Activated CD4-positive, alpha-beta T cell treated with anti-CD3 and anti-CD28 coated beads, Interleukin-2, amount 10 ng/mL, durations not matched to agents 7 days and 5 days (primary cell): ENCODE measurements at regions of chr12 and their contacts with region 1.

Region 1: GRCh38 chr12:64696080-64696741 is 63.0 kb downstream of the GNS start:
- DNase-seq: no peak
- H3K4me3 Mint-ChIP-seq: no peak overlapping the region
- H3K27ac Mint-ChIP-seq: peak overlapping the region; percentile 28
- H3K4me1 Mint-ChIP-seq: peaks cover 76% of the 10 kb centered on the region
- H3K27me3 Mint-ChIP-seq: no peaks in the 10 kb centered on the region

Region 2: DNA sequence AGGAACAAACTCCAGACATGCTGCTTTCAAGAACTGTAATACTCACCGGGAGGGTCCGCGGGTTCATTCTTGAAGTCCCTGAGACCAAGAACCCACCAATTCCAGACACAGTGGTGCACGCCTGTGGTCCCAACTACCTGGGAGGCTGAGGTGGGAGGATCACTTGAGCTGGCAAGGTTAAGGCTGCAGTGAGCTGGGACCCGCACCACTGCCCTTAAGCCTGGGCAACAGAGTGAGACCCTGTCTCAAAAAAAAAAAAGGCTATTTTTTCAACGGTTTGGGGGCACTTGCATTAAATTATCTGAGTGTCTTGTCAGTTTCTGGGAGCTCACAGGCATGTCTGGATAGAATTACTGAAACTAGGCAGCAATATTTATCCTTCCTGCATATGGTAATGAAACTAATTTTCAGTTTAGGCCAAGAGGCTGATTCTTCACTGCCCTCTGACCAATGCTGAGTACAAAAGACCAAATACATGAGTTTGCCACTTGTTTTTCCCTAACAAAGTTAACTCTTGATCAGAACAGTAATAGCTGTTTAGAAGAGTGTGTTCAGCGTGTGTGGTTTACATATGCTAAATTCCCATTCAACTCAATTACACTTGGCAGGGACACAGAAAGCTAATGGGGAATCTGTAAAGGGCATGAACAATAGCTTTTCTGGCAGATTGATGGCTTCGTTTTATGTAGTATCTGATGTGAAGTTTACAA is 151.7 kb before region 1 on chr12:
- CTCF ChIA-PET with region 1: interaction called, 19 read pairs
- POLR2A ChIA-PET with region 1: no interaction called
- DNase-seq: no peak
- H3K4me3 Mint-ChIP-seq: no peak overlapping the region
- H3K27ac Mint-ChIP-seq: no peak overlapping the region
- H3K4me1 Mint-ChIP-seq: peaks cover 2% of the 10 kb centered on the region
- H3K27me3 Mint-ChIP-seq: peaks cover 11% of the 10 kb centered on the region

Region 3: DNA sequence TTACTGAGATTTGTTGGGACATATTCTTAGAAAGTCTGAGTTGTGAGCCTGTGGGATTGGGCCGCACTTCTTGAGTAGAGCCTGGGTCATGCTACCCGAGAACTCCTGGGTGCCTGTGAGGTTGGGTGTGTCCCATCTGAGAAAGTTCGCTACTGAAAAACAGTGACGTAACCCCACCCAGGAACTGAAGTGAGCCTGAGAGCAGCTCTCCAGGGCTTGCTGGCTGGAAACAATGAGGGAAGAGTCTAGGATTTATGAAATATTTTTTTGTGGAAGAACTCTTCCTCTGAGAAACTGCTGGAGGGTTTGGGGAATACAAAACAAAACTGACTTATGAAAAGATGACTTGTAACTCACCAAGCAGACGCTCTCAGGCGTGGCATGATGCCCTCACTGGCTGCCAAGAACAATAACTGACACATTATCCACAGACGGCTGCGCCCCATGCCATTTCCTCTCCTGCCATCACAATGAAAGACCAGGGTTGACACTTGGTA is 16.7 kb before region 1 on chr12:
- CTCF ChIA-PET with region 1: interaction called, 19 read pairs
- POLR2A ChIA-PET with region 1: no interaction called
- DNase-seq: peak; percentile 73
- H3K4me3 Mint-ChIP-seq: peak overlapping the region; percentile 65
- H3K27ac Mint-ChIP-seq: peak overlapping the region; percentile 92
- H3K4me1 Mint-ChIP-seq: peaks cover 94% of the 10 kb centered on the region
- H3K27me3 Mint-ChIP-seq: no peaks in the 10 kb centered on the region

Region 4: DNA sequence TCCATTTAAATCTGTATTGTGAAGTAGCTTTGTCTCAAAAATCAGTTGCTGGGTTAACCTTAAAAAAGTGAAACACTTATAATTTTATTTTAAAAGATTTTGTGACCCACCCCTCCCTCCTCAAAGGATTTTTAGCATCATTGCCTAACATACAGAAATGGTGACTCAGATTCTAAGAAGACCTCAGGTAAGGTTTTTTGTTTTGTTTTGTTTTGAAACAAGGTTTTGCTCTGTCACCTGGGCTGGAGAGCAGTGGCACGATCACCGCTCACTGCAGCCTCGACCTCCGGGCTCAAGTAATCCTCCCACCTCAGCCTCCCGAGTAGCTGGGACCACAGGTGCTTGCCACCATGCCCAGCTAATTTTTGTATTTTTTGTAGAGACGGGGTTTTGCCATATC is 11.2 kb before region 1 on chr12:
- CTCF ChIA-PET with region 1: interaction called, 19 read pairs
- POLR2A ChIA-PET with region 1: no interaction called
- DNase-seq: no peak
- H3K4me3 Mint-ChIP-seq: peak overlapping the region; percentile 38
- H3K27ac Mint-ChIP-seq: peak overlapping the region; percentile 91
- H3K4me1 Mint-ChIP-seq: peaks cover 90% of the 10 kb centered on the region
- H3K27me3 Mint-ChIP-seq: no peaks in the 10 kb centered on the region